ENCODE measurements at regions of chr13 and their contacts with region 1.

Region 1: GRCh38 chr13:112434032-112434431 is 57.9 kb downstream of the SPACA7 start:
- DNase-seq: no peak
- ATAC-seq: no peak
- H3K4me3 ChIP-seq: no peak overlapping the region
- H3K27ac ChIP-seq: no peak overlapping the region
- H3K4me1 ChIP-seq: no peaks in the 10 kb centered on the region
- H3K27me3 ChIP-seq: no peaks in the 10 kb centered on the region
- CTCF ChIP-seq: no peak
- POLR2A ChIP-seq: no peak
- RAD21 ChIP-seq: no peak

Region 2: DNA sequence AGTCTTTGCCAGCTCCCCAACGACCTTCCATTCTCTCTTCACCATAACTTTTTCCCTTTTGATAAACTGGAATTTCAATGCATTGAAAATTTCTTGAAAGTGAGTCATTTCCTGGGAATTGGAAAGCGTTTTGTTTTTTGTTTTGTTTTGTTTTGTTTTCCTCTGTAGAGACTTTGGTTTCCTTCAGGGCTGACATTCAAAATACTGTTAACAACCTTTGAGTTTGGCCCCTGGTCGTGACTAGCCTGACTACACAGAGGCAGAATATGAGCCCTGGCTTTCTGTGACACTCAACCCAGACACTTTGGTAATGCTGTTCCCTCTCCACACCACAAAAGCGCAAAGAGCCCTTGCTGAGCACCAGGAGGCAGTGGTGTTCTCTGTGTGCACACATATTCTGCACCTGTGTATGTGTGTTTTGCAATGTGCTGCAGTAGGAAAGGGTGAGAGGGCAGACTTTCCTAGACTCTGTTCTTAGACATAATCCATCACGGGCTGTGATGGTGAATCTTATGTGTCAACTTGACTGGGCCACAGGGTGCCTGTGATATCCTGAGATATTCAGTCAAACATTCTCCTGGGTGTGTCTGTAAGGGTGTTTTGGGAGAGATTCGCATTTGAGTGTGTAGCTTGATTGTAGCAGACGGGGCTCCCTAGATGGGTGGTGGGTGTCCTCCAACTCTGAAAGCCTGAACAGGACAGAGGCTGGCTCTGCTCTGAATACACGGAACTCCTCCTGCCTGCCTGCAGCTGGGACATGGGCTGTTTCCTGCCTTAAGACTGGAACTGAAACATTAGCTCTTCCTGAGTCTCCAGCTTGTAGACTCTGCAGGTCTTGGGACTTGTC is 1489.7 kb before region 1 on chr13:
- CTCF ChIA-PET with region 1: no interaction called
- POLR2A ChIA-PET with region 1: no interaction called
- dilution Hi-C with region 1: no loop called
- in situ Hi-C with region 1: no loop called
- intact Hi-C with region 1: loop called (anchors 10 kb)
- DNase-seq: peak; percentile 69
- ATAC-seq: peak; percentile 90
- H3K4me3 ChIP-seq: no peak overlapping the region
- H3K27ac ChIP-seq: no peak overlapping the region
- H3K4me1 ChIP-seq: no peaks in the 10 kb centered on the region
- H3K27me3 ChIP-seq: no peaks in the 10 kb centered on the region
- CTCF ChIP-seq: peak; percentile 71
- POLR2A ChIP-seq: no peak
- RAD21 ChIP-seq: peak; percentile 79

Region 3: DNA sequence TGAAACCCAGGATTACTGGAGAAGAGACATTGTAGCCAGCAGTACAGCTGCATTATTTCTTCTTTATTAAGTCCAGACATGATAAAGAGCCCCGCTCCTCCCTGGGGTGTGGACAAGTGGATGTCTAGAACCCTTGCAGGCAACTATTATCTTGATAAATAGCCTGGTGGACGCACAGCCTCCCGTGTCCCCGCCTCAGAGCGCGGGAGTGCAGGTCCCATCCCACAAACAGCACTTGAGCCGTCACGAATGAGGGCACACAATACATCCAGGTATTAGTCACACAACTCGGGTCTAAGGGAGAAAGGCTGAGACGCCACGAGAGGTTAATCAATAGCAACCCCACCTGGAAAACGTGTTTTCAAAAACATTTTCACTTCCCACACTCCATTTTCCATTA is 580.3 kb before region 1 on chr13:
- CTCF ChIA-PET with region 1: no interaction called
- POLR2A ChIA-PET with region 1: no interaction called
- dilution Hi-C with region 1: no loop called
- in situ Hi-C with region 1: no loop called
- intact Hi-C with region 1: no loop called
- DNase-seq: no peak
- ATAC-seq: no peak
- H3K4me3 ChIP-seq: no peak overlapping the region
- H3K27ac ChIP-seq: no peak overlapping the region
- H3K4me1 ChIP-seq: no peaks in the 10 kb centered on the region
- H3K27me3 ChIP-seq: no peaks in the 10 kb centered on the region
- CTCF ChIP-seq: no peak
- POLR2A ChIP-seq: no peak
- RAD21 ChIP-seq: no peak

Region 4: GRCh38 chr13:112124141-112124540 is 309.9 kb before region 1 on chr13:
- CTCF ChIA-PET with region 1: no interaction called
- POLR2A ChIA-PET with region 1: no interaction called
- dilution Hi-C with region 1: no loop called
- in situ Hi-C with region 1: no loop called
- intact Hi-C with region 1: no loop called
- DNase-seq: no peak
- ATAC-seq: no peak
- H3K4me3 ChIP-seq: no peak overlapping the region
- H3K27ac ChIP-seq: no peak overlapping the region
- H3K4me1 ChIP-seq: no peaks in the 10 kb centered on the region
- H3K27me3 ChIP-seq: no peaks in the 10 kb centered on the region
- CTCF ChIP-seq: no peak
- POLR2A ChIP-seq: no peak
- RAD21 ChIP-seq: no peak

Region 5: GRCh38 chr13:112333756-112334543 is 100.1 kb before region 1 on chr13:
- CTCF ChIA-PET with region 1: no interaction called
- POLR2A ChIA-PET with region 1: no interaction called
- dilution Hi-C with region 1: no loop called
- in situ Hi-C with region 1: no loop called
- intact Hi-C with region 1: no loop called
- DNase-seq: no peak
- ATAC-seq: no peak
- H3K4me3 ChIP-seq: no peak overlapping the region
- H3K27ac ChIP-seq: no peak overlapping the region
- H3K4me1 ChIP-seq: no peaks in the 10 kb centered on the region
- H3K27me3 ChIP-seq: no peaks in the 10 kb centered on the region
- CTCF ChIP-seq: no peak
- POLR2A ChIP-seq: no peak
- RAD21 ChIP-seq: no peak

Measured in IMR-90 (cell line).